Naive thymus-derived CD4-positive, alpha-beta T cell (primary cell): ENCODE measurements at regions of chr9 and their contacts with region 1.

Region 1: DNA sequence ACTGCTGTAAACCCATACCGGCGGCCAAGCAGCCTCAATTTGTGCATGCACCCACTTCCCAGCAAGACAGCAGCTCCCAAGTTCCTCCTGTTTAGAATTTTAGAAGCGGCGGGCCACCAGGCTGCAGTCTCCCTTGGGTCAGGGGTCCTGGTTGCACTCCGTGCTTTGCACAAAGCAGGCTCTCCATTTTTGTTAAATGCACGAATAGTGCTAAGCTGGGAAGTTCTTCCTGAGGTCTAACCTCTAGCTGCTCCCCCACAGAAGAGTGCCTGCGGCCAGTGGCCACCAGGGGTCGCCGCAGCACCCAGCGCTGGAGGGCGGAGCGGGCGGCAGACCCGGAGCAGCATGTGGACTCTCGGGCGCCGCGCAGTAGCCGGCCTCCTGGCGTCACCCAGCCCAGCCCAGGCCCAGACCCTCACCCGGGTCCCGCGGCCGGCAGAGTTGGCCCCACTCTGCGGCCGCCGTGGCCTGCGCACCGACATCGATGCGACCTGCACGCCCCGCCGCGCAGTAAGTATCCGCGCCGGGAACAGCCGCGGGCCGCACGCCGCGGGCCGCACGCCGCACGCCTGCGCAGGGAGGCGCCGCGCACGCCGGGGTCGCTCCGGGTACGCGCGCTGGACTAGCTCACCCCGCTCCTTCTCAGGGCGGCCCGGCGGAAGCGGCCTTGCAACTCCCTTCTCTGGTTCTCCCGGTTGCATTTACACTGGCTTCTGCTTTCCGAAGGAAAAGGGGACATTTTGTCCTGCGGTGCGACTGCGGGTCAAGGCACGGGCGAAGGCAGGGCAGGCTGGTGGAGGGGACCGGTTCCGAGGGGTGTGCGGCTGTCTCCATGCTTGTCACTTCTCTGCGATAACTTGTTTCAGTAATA is at the start of gene FXN:
- DNase-seq: peak; percentile 60 to 89 (median 81)
- ATAC-seq: peak; percentile 95
- H3K4me3 ChIP-seq: peak within 1 kb of the TSS; percentile 72
- H3K4me3 Mint-ChIP-seq: peak within 1 kb of the TSS; percentile 91 to 99 (median 97)
- H3K27ac ChIP-seq: peak within 1 kb of the TSS; percentile 73
- H3K27ac Mint-ChIP-seq: peak within 1 kb of the TSS; percentile 88 to 95 (median 91)
- H3K4me1 ChIP-seq: peaks cover 9 to 16% of the 10 kb centered on the region in 2 donors
- H3K4me1 Mint-ChIP-seq: peaks cover 14 to 73% (median 38%) of the 10 kb centered on the region in 7 donors
- H3K27me3 ChIP-seq: no peaks in the 10 kb centered on the region
- H3K27me3 Mint-ChIP-seq: no peaks in the 10 kb centered on the region
- total RNA-seq, gene FXN: 16.7 to 28.3 (median 19.1) TPM

Region 2: GRCh38 chr9:68981789-68982188 is 53.9 kb before region 1 on chr9:
- CTCF ChIA-PET with region 1: no interaction called
- POLR2A ChIA-PET with region 1: no interaction called
- intact Hi-C with region 1: no loop called
- DNase-seq: no peak
- ATAC-seq: no peak
- H3K4me3 ChIP-seq: no peak overlapping the region
- H3K4me3 Mint-ChIP-seq: no peak overlapping the region
- H3K27ac ChIP-seq: no peak overlapping the region
- H3K27ac Mint-ChIP-seq: peak overlapping the region in 1 of 9 donors; percentile 47
- H3K4me1 ChIP-seq: no peaks in the 10 kb centered on the region
- H3K4me1 Mint-ChIP-seq: peaks cover 7 to 52% (median 17%) of the 10 kb centered on the region in 7 donors
- H3K27me3 ChIP-seq: no peaks in the 10 kb centered on the region
- H3K27me3 Mint-ChIP-seq: no peaks in the 10 kb centered on the region

Region 3: DNA sequence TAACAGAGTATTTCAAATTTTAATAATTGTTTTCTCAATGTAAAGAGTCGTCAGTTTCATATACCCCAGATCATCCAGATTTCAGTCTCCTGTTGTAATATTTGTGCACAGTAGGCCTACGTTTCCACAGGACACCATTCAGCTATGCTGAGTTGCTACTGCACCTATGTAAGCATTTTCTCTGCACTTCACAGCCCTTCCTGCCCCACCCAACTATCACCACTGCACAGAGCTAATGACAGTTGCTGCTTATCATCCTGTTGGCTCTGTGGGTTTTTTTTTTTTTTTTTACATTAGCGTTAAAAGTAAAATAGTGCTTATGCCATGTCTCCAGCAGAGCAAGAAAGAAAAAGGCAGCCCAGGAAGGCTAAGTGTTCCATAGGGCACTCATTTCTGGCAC is 15.9 kb before region 1 on chr9:
- CTCF ChIA-PET with region 1: interaction called, 23 read pairs
- POLR2A ChIA-PET with region 1: interaction called, 7 read pairs
- intact Hi-C with region 1: loop called in 1 of 2 experiments (anchors 1 kb)
- DNase-seq: peak in 7 of 9 donors; percentile 54 to 75 (median 67)
- ATAC-seq: peak; percentile 97
- H3K4me3 ChIP-seq: no peak overlapping the region
- H3K4me3 Mint-ChIP-seq: peak overlapping the region; percentile 27 to 87 (median 58)
- H3K27ac ChIP-seq: no peak overlapping the region
- H3K27ac Mint-ChIP-seq: peak overlapping the region; percentile 52 to 83 (median 71)
- H3K4me1 ChIP-seq: peaks cover 7 to 21% of the 10 kb centered on the region in 2 donors
- H3K4me1 Mint-ChIP-seq: peaks cover 29 to 53% (median 47%) of the 10 kb centered on the region in 7 donors
- H3K27me3 ChIP-seq: no peaks in the 10 kb centered on the region
- H3K27me3 Mint-ChIP-seq: peaks cover 0 to 18% (median 3%) of the 10 kb centered on the region in 5 donors

Region 4: DNA sequence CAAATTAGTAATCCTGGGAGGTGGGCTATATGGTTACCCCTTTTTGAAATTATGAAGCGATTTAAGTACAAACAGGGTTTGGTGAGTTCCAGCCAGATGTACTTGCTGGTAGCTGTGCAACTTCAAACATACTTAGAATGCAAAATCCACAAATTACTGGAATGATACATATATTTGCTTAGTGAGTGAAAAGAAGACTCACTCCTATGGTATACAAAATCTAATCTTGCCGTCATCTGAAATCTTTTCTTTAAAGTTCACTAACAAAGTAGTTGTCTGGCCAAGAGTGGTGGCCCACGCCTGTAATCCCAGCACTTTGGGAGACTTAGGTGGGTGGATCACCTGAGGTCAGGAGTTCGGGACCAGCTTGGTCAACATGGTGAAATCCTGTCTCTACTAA is 73.5 kb after region 1 on chr9:
- CTCF ChIA-PET with region 1: no interaction called
- POLR2A ChIA-PET with region 1: no interaction called
- intact Hi-C with region 1: no loop called
- DNase-seq: no peak
- ATAC-seq: no peak
- H3K4me3 ChIP-seq: no peak overlapping the region
- H3K4me3 Mint-ChIP-seq: no peak overlapping the region
- H3K27ac ChIP-seq: no peak overlapping the region
- H3K27ac Mint-ChIP-seq: no peak overlapping the region
- H3K4me1 ChIP-seq: no peaks in the 10 kb centered on the region
- H3K4me1 Mint-ChIP-seq: no peaks in the 10 kb centered on the region
- H3K27me3 ChIP-seq: no peaks in the 10 kb centered on the region
- H3K27me3 Mint-ChIP-seq: no peaks in the 10 kb centered on the region

Region 5: DNA sequence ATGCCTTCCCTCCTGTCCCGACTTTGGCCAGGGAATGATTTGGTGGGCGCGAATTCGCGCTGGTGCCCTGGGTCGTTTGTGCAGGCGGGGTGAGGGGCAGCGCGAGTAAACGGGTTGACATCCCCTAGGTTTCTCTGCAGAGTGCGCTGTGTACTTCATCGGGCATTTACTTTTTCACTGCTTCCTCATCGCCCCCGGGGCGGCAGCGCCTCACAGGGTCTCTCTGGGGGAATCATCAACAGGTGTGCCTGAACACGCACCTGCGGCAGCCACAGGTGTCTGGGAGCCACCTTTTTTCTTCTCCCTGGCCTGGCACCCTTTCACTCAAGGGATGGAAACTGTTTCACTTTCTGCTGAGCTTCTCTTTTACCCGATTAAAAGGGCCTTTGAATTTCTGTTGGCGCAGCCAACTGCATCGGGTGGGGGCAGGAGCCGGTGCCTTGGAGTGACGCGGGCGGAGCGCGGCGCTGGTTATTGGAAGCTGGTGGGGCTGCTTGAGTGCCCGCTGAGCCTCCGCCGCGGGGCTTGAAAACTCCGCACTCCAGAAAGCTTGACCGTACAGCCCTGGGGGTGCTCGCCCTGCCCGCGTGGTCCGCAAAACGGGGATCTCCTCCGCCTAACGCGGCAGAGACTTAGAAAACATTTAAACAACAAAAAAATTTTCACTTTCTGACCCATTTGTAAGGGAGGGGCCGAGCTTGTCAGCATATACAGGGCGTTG is 86.3 kb after region 1 on chr9:
- CTCF ChIA-PET with region 1: no interaction called
- POLR2A ChIA-PET with region 1: no interaction called
- intact Hi-C with region 1: loop called in 1 of 2 experiments (anchors 5 kb)
- DNase-seq: peak; percentile 36 to 68 (median 56)
- ATAC-seq: peak; percentile 82
- H3K4me3 ChIP-seq: peak overlapping the region; percentile 81
- H3K4me3 Mint-ChIP-seq: peak overlapping the region; percentile 94 to 98 (median 98)
- H3K27ac ChIP-seq: peak overlapping the region; percentile 49
- H3K27ac Mint-ChIP-seq: peak overlapping the region; percentile 72 to 95 (median 85)
- H3K4me1 ChIP-seq: peaks cover 0 to 7% of the 10 kb centered on the region in 2 donors
- H3K4me1 Mint-ChIP-seq: peaks cover 0 to 19% (median 11%) of the 10 kb centered on the region in 7 donors
- H3K27me3 ChIP-seq: no peaks in the 10 kb centered on the region
- H3K27me3 Mint-ChIP-seq: peaks cover 0 to 14% (median 0%) of the 10 kb centered on the region in 5 donors

Region 6: DNA sequence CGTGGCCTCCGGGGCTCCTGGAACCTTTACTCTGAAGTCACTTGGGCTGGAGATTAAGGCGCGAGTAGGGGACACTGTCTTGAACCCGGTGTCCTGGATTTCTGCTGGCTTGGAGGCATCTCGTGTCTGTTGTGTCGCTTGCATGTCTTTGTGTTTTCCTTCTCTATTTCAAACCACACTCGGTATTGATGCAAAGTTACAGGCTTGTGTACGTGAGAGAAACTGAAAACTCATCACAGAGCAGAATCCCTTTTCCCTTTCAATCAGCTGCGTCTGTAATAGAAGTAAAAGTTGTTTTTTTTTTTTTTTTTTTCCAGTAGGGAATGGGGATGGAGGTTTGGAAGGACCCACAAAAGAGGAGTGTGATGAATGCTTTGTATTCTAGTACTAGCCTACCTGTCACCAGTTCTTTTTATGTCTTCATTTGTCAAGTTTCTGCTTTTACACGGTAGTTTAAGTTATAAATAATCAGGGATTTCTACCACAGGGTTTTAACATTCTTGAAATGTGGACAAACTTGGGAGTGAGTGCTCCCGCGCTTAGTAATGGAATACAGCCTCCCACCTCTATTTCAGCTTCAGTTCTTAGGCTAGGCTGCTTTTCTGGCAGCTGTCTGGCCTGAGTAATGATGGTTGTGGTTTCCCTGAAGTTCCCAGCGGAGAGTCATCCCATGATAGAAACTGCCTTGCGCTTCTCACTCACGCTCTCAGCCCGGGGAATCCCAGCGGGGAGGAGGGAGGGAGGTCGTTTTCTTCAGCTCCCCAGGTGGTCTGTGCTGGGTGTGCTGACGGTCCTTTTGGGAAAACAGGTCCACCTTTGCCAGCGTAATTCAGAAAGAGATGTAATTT is 139.2 kb after region 1 on chr9:
- CTCF ChIA-PET with region 1: no interaction called
- POLR2A ChIA-PET with region 1: no interaction called
- intact Hi-C with region 1: loop called (anchors 1 to 5 kb)
- DNase-seq: peak in 1 of 9 donors; percentile 69
- ATAC-seq: peak; percentile 57
- H3K4me3 ChIP-seq: peak overlapping the region; percentile 36
- H3K4me3 Mint-ChIP-seq: peak overlapping the region; percentile 76 to 92 (median 82)
- H3K27ac ChIP-seq: no peak overlapping the region
- H3K27ac Mint-ChIP-seq: peak overlapping the region in 1 of 9 donors; percentile 79
- H3K4me1 ChIP-seq: peaks cover 10 to 12% of the 10 kb centered on the region in 2 donors
- H3K4me1 Mint-ChIP-seq: peaks cover 25 to 60% (median 30%) of the 10 kb centered on the region in 7 donors
- H3K27me3 ChIP-seq: no peaks in the 10 kb centered on the region
- H3K27me3 Mint-ChIP-seq: peaks cover 15 to 43% (median 24%) of the 10 kb centered on the region in 5 donors

Region 7: GRCh38 chr9:69919461-69920061 is 883.9 kb after region 1 on chr9:
- CTCF ChIA-PET with region 1: no interaction called
- POLR2A ChIA-PET with region 1: no interaction called
- intact Hi-C with region 1: loop called in 1 of 2 experiments (anchors 5 kb)
- DNase-seq: peak in 6 of 9 donors; percentile 14 to 52 (median 41)
- ATAC-seq: peak; percentile 85
- H3K4me3 ChIP-seq: no peak overlapping the region
- H3K4me3 Mint-ChIP-seq: no peak overlapping the region
- H3K27ac ChIP-seq: no peak overlapping the region
- H3K27ac Mint-ChIP-seq: no peak overlapping the region
- H3K4me1 ChIP-seq: no peaks in the 10 kb centered on the region
- H3K4me1 Mint-ChIP-seq: no peaks in the 10 kb centered on the region
- H3K27me3 ChIP-seq: no peaks in the 10 kb centered on the region
- H3K27me3 Mint-ChIP-seq: peaks cover 5 to 21% (median 17%) of the 10 kb centered on the region in 5 donors